ENCODE measurements at regions of chr17 and their contacts with region 1.

Region 1: DNA sequence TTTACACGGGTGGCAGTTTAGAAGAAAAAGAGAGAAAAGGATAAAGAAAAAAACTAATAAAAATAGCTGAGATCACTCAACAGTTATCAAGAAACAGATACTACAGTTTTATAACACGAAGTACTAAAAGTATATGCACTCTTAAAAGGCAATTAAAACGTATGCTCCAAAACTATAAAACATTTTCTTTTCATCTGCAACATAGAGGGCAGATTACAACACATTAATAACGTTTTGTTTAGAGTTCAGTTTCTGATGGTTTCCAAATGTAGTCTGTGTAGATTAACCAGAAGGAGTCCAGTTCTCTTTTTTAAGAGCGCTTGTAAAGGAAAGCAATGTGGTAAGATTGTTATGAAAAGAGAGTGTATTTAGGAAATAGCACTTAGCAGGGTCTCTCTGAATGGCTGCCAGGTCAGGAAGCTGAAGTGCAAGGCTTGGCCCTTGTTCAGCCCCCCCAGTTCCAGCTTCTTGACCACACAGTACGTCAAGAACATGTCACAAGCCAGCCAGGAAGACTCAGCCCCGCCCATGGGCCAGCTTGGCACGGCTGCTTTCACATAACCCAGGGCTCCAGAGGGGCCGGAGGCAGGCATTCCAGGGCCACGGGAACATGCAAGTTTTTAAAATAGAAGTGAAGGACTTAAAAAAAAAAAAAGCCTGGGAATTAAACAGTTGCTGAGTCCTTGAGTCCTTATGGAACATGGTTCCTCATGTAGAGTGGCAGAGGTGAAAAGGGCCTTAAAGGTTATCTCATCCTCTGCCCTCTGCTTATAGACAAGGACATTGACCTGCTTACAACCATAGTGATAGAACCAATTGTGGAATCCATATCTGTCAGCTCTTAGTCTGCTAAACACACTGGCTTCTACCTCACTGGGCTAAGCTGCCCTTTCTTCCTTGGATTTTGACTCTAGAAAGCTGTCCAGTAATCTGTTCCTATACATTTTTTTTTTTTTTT is 147.4 kb upstream of the TBX2 start:
- DNase-seq: peak; percentile 94
- ATAC-seq: peak; percentile 97
- H3K4me3 ChIP-seq: no peak overlapping the region
- H3K27ac ChIP-seq: peak overlapping the region; percentile 73
- H3K4me1 ChIP-seq: peaks cover 59% of the 10 kb centered on the region
- H3K27me3 ChIP-seq: no peaks in the 10 kb centered on the region
- CTCF ChIP-seq: no peak

Region 2: DNA sequence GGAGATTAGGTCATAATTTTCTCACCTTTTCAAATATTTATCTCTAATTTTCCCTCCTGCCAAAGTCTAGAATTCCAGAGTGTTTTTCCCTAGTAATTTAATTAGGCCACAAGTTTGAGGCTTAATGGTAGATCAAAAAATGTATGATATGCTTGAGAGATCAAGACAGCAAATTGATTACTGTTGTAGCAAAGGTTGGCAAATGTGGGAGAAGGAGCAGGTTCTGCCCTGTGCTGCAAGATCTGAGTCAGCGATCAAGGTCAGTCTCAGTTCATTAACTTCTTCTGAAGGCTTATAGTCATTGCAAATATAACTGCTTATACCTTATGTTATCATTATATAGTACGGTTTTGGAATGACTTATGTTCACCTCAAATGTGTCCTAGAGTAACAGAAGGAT is 83.8 kb before region 1 on chr17:
- intact Hi-C with region 1: no loop called
- DNase-seq: no peak
- ATAC-seq: no peak
- H3K4me3 ChIP-seq: no peak overlapping the region
- H3K27ac ChIP-seq: no peak overlapping the region
- H3K4me1 ChIP-seq: no peaks in the 10 kb centered on the region
- H3K27me3 ChIP-seq: no peaks in the 10 kb centered on the region
- CTCF ChIP-seq: no peak

Region 3: GRCh38 chr17:61208301-61209105 is 43.7 kb before region 1 on chr17:
- intact Hi-C with region 1: loop called (anchors 5 kb)
- DNase-seq: no peak
- ATAC-seq: peak; percentile 62
- H3K4me3 ChIP-seq: peak overlapping the region; percentile 25
- H3K27ac ChIP-seq: peak overlapping the region; percentile 83
- H3K4me1 ChIP-seq: peaks cover 31% of the 10 kb centered on the region
- H3K27me3 ChIP-seq: no peaks in the 10 kb centered on the region
- CTCF ChIP-seq: no peak

Measured in upper lobe of right lung (tissue), 1 donor.